Gastrocnemius medialis (tissue), 4 donors: ENCODE measurements at regions of chr9 and their contacts with region 1.

Region 1: DNA sequence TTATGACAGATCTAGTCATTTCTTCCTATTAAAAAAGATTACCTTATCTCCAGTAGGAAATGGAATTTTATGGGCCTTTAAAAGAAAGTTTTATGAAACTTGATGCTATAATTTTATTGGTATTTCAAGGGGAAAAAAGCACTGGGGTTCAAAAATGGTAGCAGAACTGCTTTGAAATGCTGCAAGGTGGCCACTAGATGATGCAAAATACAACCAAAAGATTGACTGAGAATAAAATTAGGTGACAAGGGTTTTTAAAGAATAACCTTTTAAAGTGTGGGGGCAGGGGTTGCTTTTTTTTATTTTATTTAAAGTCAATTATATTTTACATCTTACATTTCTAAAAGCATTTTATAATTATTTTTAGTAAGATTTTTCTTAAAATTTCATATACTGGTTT is 61.7 kb downstream of the KLF9 start:
- DNase-seq: no peak
- ATAC-seq: peak; percentile 47 to 68
- H3K4me3 ChIP-seq: no peak overlapping the region
- H3K27ac ChIP-seq: peak overlapping the region in 3 of 4 donors; percentile 16 to 43 (median 18)
- H3K4me1 ChIP-seq: peaks cover 0 to 16% of the 10 kb centered on the region in 2 donors
- H3K27me3 ChIP-seq: no peaks in the 10 kb centered on the region
- CTCF ChIP-seq: peak; percentile 35 to 79 (median 65)
- POLR2A ChIP-seq: no peak

Region 2: GRCh38 chr9:70160686-70161600 is 191.9 kb before region 1 on chr9:
- in situ Hi-C with region 1: no loop called
- intact Hi-C with region 1: no loop called
- DNase-seq: no peak
- ATAC-seq: no peak
- H3K4me3 ChIP-seq: no peak overlapping the region
- H3K27ac ChIP-seq: peak overlapping the region in 3 of 4 donors; percentile 8 to 20 (median 19)
- H3K4me1 ChIP-seq: peaks cover 15 to 31% of the 10 kb centered on the region in 2 donors
- H3K27me3 ChIP-seq: no peaks in the 10 kb centered on the region
- CTCF ChIP-seq: no peak
- POLR2A ChIP-seq: no peak

Region 3: DNA sequence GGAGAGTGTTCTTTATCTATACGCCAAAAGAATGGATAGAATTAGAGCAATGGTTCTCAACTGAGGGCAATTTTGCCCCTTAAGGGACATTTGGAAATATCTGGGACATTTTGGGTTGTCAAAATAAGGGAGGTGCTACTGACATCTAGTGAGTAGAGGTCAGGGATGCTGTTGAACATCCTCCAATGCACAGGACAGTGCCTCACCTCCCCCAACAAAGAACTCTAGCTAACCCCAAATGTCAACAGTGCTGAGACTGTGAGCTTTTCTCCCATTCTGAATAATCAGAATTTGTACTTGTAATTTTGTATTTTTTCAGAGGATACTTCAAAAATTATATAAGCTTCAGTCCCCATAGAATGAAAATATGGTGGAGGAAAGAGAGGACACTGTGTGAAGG is 102.6 kb before region 1 on chr9:
- in situ Hi-C with region 1: no loop called
- intact Hi-C with region 1: no loop called
- DNase-seq: no peak
- ATAC-seq: no peak
- H3K4me3 ChIP-seq: no peak overlapping the region
- H3K27ac ChIP-seq: no peak overlapping the region
- H3K4me1 ChIP-seq: no peaks in the 10 kb centered on the region
- H3K27me3 ChIP-seq: no peaks in the 10 kb centered on the region
- CTCF ChIP-seq: no peak
- POLR2A ChIP-seq: no peak

Region 4: GRCh38 chr9:70315389-70315788 is 37.4 kb before region 1 on chr9:
- in situ Hi-C with region 1: no loop called
- intact Hi-C with region 1: no loop called
- DNase-seq: no peak
- ATAC-seq: no peak
- H3K4me3 ChIP-seq: no peak overlapping the region
- H3K27ac ChIP-seq: no peak overlapping the region
- H3K4me1 ChIP-seq: no peaks in the 10 kb centered on the region
- H3K27me3 ChIP-seq: no peaks in the 10 kb centered on the region
- CTCF ChIP-seq: no peak
- POLR2A ChIP-seq: no peak

Region 5: DNA sequence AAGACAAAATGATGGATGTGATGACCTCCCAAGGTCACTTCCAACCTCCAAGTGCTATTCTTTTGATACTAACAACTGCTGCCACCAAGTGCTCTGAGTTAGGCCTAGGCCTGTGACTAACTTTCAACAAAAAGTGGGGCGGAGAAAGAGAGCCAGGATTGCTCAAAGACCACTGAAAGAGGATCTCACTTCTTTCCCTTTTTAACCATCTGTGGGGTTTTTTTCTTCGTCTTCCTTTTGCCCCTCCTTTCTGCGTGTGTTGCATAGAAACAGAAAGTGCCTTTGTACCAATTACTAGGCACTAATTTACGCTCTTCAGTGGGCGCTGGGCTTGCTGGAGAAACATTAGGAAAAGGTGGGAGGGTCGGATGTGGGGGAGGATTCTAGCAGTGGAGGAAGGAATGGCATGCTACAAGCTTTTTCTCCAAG is 53.6 kb after region 1 on chr9:
- in situ Hi-C with region 1: no loop called
- intact Hi-C with region 1: loop called (anchors 5 kb)
- DNase-seq: no peak
- ATAC-seq: no peak
- H3K4me3 ChIP-seq: peak overlapping the region; percentile 14 to 98 (median 47)
- H3K27ac ChIP-seq: peak overlapping the region; percentile 78 to 100 (median 86)
- H3K4me1 ChIP-seq: peaks cover 82 to 88% of the 10 kb centered on the region in 2 donors
- H3K27me3 ChIP-seq: no peaks in the 10 kb centered on the region
- CTCF ChIP-seq: no peak
- POLR2A ChIP-seq: no peak

Region 6: GRCh38 chr9:70504834-70505233 is 152.0 kb after region 1 on chr9:
- in situ Hi-C with region 1: no loop called
- intact Hi-C with region 1: loop called (anchors 5 kb)
- DNase-seq: no peak
- ATAC-seq: no peak
- H3K4me3 ChIP-seq: no peak overlapping the region
- H3K27ac ChIP-seq: peak overlapping the region in 3 of 4 donors; percentile 6 to 57 (median 51)
- H3K4me1 ChIP-seq: peaks cover 21 to 35% of the 10 kb centered on the region in 2 donors
- H3K27me3 ChIP-seq: no peaks in the 10 kb centered on the region
- CTCF ChIP-seq: no peak
- POLR2A ChIP-seq: no peak

Region 7: DNA sequence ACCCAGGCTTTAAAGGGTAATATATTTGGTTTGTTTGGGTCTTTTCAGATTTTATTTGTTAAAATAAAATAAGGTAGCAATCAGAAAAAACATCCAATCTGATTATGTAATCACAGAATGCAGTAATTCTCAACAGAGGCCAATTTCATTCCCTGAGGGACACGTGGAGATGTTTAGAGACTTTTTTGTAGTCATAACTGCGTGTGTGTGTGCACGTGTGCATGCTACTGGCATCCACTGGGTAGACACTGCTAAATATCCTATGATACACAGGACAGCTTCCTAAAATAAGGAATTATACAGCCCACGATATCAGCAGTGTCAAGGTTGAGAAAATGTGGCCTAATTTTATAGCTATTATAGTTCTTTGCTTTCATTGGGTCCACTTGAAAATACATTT is 242.4 kb after region 1 on chr9:
- in situ Hi-C with region 1: loop called in 3 of 4 experiments (anchors 5 to 10 kb)
- intact Hi-C with region 1: no loop called
- DNase-seq: no peak
- ATAC-seq: peak; percentile 32 to 37
- H3K4me3 ChIP-seq: no peak overlapping the region
- H3K27ac ChIP-seq: peak overlapping the region in 3 of 4 donors; percentile 48 to 64 (median 56)
- H3K4me1 ChIP-seq: peaks cover 10 to 15% of the 10 kb centered on the region in 2 donors
- H3K27me3 ChIP-seq: no peaks in the 10 kb centered on the region
- CTCF ChIP-seq: no peak
- POLR2A ChIP-seq: no peak